Heart left ventricle (tissue), 16 donors: ENCODE measurements at regions of chr18 and their contacts with region 1.

Region 1: GRCh38 chr18:56869189-56869777 is 218.1 kb downstream of the WDR7 start:
- DNase-seq: no peak
- ATAC-seq: peak in 3 of 4 donors; percentile 45 to 56 (median 45)
- H3K4me3 ChIP-seq: no peak overlapping the region
- H3K27ac ChIP-seq: no peak overlapping the region
- H3K4me1 ChIP-seq: peaks cover 0 to 7% (median 0%) of the 10 kb centered on the region in 12 donors
- H3K27me3 ChIP-seq: no peaks in the 10 kb centered on the region
- CTCF ChIP-seq: peak; percentile 50 to 77 (median 66)
- POLR2A ChIP-seq: no peak

Region 2: DNA sequence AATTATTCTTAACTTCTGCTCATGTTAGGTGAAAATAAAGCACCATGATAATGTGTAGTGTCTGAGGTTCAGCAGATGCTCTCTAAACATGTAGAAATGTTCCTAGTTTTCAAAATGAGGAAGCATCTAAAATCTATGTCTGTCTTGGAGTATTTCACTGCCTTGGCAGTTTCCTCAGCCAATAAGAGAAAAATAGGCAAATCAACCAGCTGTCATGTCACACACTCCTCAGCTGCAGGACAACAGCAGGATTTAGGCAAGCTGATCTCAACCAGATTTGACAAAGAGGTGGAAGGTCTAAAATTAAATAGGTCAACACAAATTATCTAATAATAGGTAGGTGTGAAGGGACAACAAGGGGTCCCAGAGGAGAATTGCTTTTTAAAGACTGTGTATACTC is 113.5 kb after region 1 on chr18:
- intact Hi-C with region 1: loop called in 1 of 10 experiments (anchors 10 kb)
- DNase-seq: no peak
- ATAC-seq: no peak
- H3K4me3 ChIP-seq: no peak overlapping the region
- H3K27ac ChIP-seq: no peak overlapping the region
- H3K4me1 ChIP-seq: peaks cover 0 to 8% (median 0%) of the 10 kb centered on the region in 12 donors
- H3K27me3 ChIP-seq: no peaks in the 10 kb centered on the region
- CTCF ChIP-seq: no peak
- POLR2A ChIP-seq: no peak

Region 3: GRCh38 chr18:56995579-56996188 is 126.4 kb after region 1 on chr18:
- intact Hi-C with region 1: loop called in 2 of 10 experiments (anchors 10 kb)
- DNase-seq: no peak
- ATAC-seq: no peak
- H3K4me3 ChIP-seq: no peak overlapping the region
- H3K27ac ChIP-seq: no peak overlapping the region
- H3K4me1 ChIP-seq: peaks cover 0 to 8% (median 0%) of the 10 kb centered on the region in 12 donors
- H3K27me3 ChIP-seq: no peaks in the 10 kb centered on the region
- CTCF ChIP-seq: peak in 2 of 12 donors; percentile 18 to 20
- POLR2A ChIP-seq: no peak

Region 4: DNA sequence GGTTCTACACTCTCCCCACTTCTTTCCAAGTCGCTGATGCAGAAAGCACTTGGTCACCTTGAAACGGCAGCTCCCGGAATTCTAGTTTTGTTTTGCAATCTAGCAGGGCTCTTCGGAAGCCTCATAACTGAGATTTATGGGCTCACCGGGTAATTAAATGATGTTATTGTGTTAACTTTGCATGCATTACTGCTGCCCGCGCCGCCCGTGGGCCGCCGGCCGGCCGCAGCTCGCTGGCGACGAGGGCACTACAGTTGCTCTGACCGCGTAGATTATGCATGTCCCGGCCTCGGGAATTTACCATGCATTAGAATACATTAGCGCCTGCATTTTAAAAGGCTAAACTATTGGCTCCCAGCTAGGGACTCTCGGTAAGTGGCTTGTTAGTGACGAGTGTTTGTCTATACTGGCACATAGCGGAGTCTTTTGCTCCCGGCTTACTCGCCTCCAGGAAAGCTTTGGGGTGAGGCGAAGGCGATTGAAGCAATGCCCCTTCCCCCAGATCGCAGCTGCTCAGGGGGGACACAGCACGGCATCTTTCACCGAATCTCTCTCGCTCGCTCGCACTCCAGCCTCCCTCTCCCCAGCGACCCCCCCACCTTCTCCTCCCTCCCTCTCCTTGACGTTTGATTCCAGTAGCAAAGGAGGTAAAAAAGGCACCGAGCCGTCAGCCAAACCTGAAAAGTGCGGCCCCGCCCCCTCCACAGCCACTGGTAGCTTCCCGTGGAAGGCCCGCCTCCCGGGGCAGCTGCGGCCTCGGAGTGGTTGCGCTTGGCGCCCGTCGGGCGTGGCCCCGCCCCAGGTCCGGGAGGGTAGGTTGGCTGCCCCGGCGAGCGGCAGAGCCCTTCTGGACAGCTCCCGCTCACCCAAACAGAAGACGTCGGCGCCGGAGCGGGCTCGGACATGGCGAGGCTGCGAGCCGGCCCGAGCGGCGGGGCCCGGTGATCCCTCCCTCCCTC is 565.5 kb after region 1 on chr18 and contains the start of gene ONECUT2:
- intact Hi-C with region 1: loop called in 7 of 10 experiments (anchors 2 to 10 kb)
- DNase-seq: peak; percentile 89 to 95 (median 93)
- ATAC-seq: peak; percentile 97 to 100 (median 99)
- H3K4me3 ChIP-seq: peak within 1 kb of the TSS; percentile 22 to 67 (median 54)
- H3K27ac ChIP-seq: no peak within 1 kb of the TSS
- H3K4me1 ChIP-seq: peaks cover 2 to 63% (median 36%) of the 10 kb centered on the region in 12 donors
- H3K27me3 ChIP-seq: peaks cover 76 to 96% (median 91%) of the 10 kb centered on the region in 9 donors
- CTCF ChIP-seq: no peak
- POLR2A ChIP-seq: no peak
- total RNA-seq, gene ONECUT2: 0.02 to 0.08 (median 0.05) TPM in 5 of 9 donors, not detected in the others

Region 5: GRCh38 chr18:57446322-57446721 is 577.0 kb after region 1 on chr18:
- intact Hi-C with region 1: loop called in 1 of 10 experiments (anchors 10 kb)
- DNase-seq: no peak
- ATAC-seq: no peak
- H3K4me3 ChIP-seq: no peak overlapping the region
- H3K27ac ChIP-seq: no peak overlapping the region
- H3K4me1 ChIP-seq: peaks cover 0 to 5% (median under 1%) of the 10 kb centered on the region in 12 donors
- H3K27me3 ChIP-seq: peaks cover 18 to 79% (median 47%) of the 10 kb centered on the region in 9 donors
- CTCF ChIP-seq: peak; percentile 5 to 49 (median 26)
- POLR2A ChIP-seq: no peak

Region 6: GRCh38 chr18:57561728-57562423 is 692.6 kb after region 1 on chr18:
- intact Hi-C with region 1: loop called in 4 of 10 experiments (anchors 5 to 10 kb)
- DNase-seq: no peak
- ATAC-seq: peak in 3 of 4 donors; percentile 28 to 44 (median 30)
- H3K4me3 ChIP-seq: no peak overlapping the region
- H3K27ac ChIP-seq: no peak overlapping the region
- H3K4me1 ChIP-seq: peaks cover 0 to 19% (median 0%) of the 10 kb centered on the region in 12 donors
- H3K27me3 ChIP-seq: no peaks in the 10 kb centered on the region
- CTCF ChIP-seq: peak; percentile 77 to 93 (median 86)
- POLR2A ChIP-seq: no peak

Region 7: GRCh38 chr18:57803103-57803969 is 934.1 kb after region 1 on chr18 and contains the start of gene ATP8B1:
- intact Hi-C with region 1: no loop called
- DNase-seq: peak; percentile 84 to 87 (median 86)
- ATAC-seq: peak; percentile 88 to 95 (median 91)
- H3K4me3 ChIP-seq: peak within 1 kb of the TSS; percentile 78 to 97 (median 90)
- H3K27ac ChIP-seq: peak within 1 kb of the TSS; percentile 70 to 97 (median 92)
- H3K4me1 ChIP-seq: peaks cover 0 to 65% (median 26%) of the 10 kb centered on the region in 12 donors
- H3K27me3 ChIP-seq: peaks cover 0 to 46% (median 0%) of the 10 kb centered on the region in 9 donors
- CTCF ChIP-seq: no peak
- POLR2A ChIP-seq: peak in 1 of 2 donors; percentile 76
- total RNA-seq, gene ATP8B1: 5.3 to 12.8 (median 6.5) TPM